ENCODE measurements at regions of chr18 and their contacts with region 1.

Region 1: DNA sequence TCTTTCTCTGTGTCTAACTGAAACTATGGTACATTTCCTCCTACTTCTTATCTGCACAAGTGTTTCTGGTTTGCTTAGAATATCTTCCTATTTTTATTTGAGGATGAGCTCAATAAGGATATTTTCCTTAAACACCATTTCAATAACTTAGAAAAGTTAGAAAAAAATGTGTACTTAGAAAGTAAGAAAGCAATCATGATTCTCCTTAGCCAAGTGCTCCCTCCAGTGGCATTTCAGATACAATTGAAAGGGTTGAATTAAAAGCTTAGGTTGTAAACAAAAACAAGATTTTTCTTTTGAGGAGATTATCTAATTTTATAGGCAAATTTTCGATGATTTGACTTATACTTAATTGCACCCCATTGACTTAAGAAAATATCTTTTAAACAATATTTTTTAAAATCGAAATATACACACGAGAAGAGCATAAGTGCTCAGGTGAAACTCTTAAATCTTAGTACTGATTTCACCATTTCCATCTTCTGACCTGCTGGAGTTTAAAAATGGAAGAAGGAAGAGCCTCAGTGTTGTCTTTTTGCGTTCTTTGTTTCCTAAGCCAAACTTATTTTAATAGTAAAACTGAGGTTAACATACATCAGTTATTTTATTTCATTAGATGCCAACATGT is 26.9 kb downstream of the C18orf63 start:
- DNase-seq: no peak
- H3K4me3 ChIP-seq: no peak overlapping the region
- H3K27ac ChIP-seq: no peak overlapping the region
- H3K4me1 ChIP-seq: no peaks in the 10 kb centered on the region
- H3K27me3 ChIP-seq: no peaks in the 10 kb centered on the region
- CTCF ChIP-seq: peak in 2 of 3 experiments; percentile 43 to 51; a peak in 2 of 4 replicates
- EP300 ChIP-seq: no peak
- POLR2A ChIP-seq: no peak
- RAD21 ChIP-seq: peak; percentile 69 to 84

Region 2: GRCh38 chr18:74147491-74147778 is 195.1 kb before region 1 on chr18:
- CTCF ChIA-PET with region 1: no interaction called
- POLR2A ChIA-PET with region 1: no interaction called
- DNase-seq: no peak
- H3K4me3 ChIP-seq: peak overlapping the region; percentile 77 to 100 (median 88)
- H3K27ac ChIP-seq: no peak overlapping the region
- H3K4me1 ChIP-seq: peaks cover 0 to 6% (median 1%) of the 10 kb centered on the region in 4 experiments; a peak in 4 of 7 replicates
- H3K27me3 ChIP-seq: no peaks in the 10 kb centered on the region; a peak in 2 of 7 replicates
- CTCF ChIP-seq: no peak
- EP300 ChIP-seq: no peak
- POLR2A ChIP-seq: no peak
- RAD21 ChIP-seq: no peak

Region 3: DNA sequence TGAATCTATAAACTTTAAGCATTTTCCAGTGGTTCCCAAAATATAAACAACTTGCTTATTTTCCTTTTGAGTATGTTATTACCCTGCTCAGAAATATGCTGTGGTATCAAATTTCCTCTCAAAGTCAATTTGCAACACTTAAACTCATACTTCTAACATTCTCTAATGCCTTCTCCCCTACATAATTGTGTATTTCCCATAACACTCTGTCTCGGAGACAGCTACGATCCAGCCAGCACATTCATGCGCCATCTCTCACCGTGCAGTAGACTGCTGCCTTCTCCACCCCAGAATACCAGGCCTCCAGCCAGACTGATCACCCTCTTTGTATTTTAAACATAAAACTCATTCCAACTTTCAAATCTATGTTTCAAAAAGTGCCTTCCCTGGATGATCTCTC is 152.4 kb before region 1 on chr18:
- CTCF ChIA-PET with region 1: interaction called, 32 read pairs
- POLR2A ChIA-PET with region 1: no interaction called
- DNase-seq: no peak
- H3K4me3 ChIP-seq: no peak overlapping the region
- H3K27ac ChIP-seq: no peak overlapping the region
- H3K4me1 ChIP-seq: peaks cover 0 to 3% (median under 1%) of the 10 kb centered on the region in 4 experiments; a peak in 4 of 7 replicates
- H3K27me3 ChIP-seq: no peaks in the 10 kb centered on the region
- CTCF ChIP-seq: no peak
- EP300 ChIP-seq: no peak
- POLR2A ChIP-seq: no peak
- RAD21 ChIP-seq: no peak

Region 4: DNA sequence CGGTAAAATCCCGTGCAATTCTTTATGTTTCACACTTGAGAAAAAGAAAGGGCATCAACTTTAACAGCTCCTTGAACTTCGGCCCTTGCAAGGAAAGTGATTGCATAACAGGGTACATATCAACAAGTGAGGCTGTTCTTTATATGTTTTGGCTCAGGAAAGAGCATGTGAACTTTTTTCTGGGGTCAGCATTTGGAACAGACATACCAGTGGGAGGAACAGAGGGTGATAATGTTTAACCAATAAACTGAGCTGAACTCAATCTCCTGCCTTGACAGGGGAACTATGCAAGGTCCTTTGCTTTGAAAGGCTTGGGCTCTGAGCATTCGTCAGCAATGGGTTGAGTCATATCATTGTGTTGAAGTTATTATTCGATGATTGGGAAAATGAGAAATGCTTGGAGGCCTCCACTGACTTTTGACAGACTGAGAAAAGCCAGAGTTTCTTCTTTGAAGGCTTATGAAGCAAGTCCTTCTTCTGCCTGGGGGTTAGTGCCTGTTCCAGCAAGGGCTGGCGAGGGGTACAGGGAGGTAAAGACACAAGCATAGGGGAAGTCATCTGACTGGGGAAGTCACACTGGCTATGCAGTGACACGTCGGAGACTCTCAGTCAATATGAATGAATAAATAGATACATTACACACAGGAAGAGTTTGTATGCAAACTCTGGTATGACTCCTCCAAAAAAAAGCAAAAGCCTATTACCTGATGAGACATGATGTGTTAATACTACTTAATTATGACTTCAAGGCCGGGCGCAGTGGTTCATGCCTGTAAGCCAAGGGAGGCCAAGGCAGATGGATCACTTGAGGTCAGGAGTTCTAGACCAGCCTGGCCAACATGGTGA is 108.0 kb before region 1 on chr18:
- CTCF ChIA-PET with region 1: interaction called, 21 read pairs
- POLR2A ChIA-PET with region 1: no interaction called
- DNase-seq: no peak
- H3K4me3 ChIP-seq: no peak overlapping the region
- H3K27ac ChIP-seq: no peak overlapping the region
- H3K4me1 ChIP-seq: peaks cover 0 to 4% (median 1%) of the 10 kb centered on the region in 4 experiments; a peak in 2 of 7 replicates
- H3K27me3 ChIP-seq: no peaks in the 10 kb centered on the region; a peak in 1 of 7 replicates
- CTCF ChIP-seq: no peak
- EP300 ChIP-seq: no peak
- POLR2A ChIP-seq: no peak
- RAD21 ChIP-seq: no peak

Region 5: GRCh38 chr18:74291771-74292540 is 50.6 kb before region 1 on chr18 and contains the start of gene CYB5A:
- CTCF ChIA-PET with region 1: no interaction called
- POLR2A ChIA-PET with region 1: no interaction called
- DNase-seq: peak; percentile 84 to 99
- H3K4me3 ChIP-seq: peak within 1 kb of the TSS; percentile 79 to 97 (median 86)
- H3K27ac ChIP-seq: no peak within 1 kb of the TSS; the same call in 1 of the 2 replicates
- H3K4me1 ChIP-seq: peaks cover 4 to 18% (median 7%) of the 10 kb centered on the region in 4 experiments; a peak in 6 of 7 replicates
- H3K27me3 ChIP-seq: no peaks in the 10 kb centered on the region
- CTCF ChIP-seq: peak in 2 of 3 experiments; percentile 0 to 17; a peak in 2 of 4 replicates
- EP300 ChIP-seq: no peak
- POLR2A ChIP-seq: no peak
- RAD21 ChIP-seq: peak in 1 of 2 experiments; percentile 10; a peak in 1 of 4 replicates
- total RNA-seq, gene CYB5A: 153 and 154 TPM in 2 replicates

Region 6: DNA sequence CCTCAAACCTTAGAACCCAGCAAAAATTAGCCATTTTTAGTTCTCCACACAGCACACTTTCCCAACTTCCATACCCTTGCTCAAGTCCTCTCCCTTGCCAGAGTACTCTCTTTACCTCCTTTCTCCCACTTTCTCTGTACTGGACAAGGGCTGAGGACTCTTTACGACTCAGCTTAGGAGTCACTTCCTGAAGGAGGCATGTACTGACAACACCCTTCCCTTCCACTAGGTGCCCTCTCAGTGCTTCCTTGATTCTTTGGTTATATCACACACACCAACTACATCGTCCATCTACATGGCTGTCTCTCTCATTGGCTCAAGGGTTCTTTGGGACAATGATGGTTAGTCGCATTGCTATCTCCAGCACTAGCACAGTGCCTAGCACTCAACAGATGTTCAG is 32.1 kb before region 1 on chr18:
- CTCF ChIA-PET with region 1: interaction called, 17 read pairs
- POLR2A ChIA-PET with region 1: no interaction called
- DNase-seq: no peak
- H3K4me3 ChIP-seq: no peak overlapping the region
- H3K27ac ChIP-seq: no peak overlapping the region
- H3K4me1 ChIP-seq: no peaks in the 10 kb centered on the region
- H3K27me3 ChIP-seq: no peaks in the 10 kb centered on the region
- CTCF ChIP-seq: peak; percentile 3 to 69 (median 35); a peak in 3 of 4 replicates
- EP300 ChIP-seq: no peak
- POLR2A ChIP-seq: no peak
- RAD21 ChIP-seq: peak; percentile 47 to 63; a peak in 3 of 4 replicates